Endothelial cell of umbilical vein (primary cell): ENCODE measurements at regions of chr2 and their contacts with region 1.

Region 1: DNA sequence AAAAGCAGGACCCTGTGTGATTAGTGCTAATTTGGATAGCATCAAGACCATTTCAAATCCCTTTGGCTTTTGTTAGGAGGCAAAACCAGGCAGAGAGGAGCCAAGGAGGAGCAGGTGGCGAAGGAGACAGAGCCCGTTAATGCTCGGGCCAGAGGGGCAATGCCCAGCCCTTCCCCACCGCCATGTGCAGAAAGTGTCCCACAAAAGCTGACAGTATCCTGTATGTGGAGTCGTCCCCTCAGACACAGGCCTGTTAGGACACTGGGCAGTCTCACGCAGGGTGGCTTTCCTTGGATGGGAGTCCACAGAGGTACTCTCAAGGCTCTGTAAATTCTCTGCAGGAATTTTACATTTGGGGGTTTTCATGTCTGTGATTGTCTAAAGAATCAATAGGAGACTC is 44.8 kb upstream of the TFCP2L1 start:
- DNase-seq: no peak
- H3K4me3 ChIP-seq: no peak overlapping the region
- H3K27ac ChIP-seq: no peak overlapping the region
- H3K4me1 ChIP-seq: no peaks in the 10 kb centered on the region
- H3K27me3 ChIP-seq: peaks cover 0 to 2% of the 10 kb centered on the region in 2 experiments
- CTCF ChIP-seq: no peak
- POLR2A ChIP-seq: no peak

Region 2: DNA sequence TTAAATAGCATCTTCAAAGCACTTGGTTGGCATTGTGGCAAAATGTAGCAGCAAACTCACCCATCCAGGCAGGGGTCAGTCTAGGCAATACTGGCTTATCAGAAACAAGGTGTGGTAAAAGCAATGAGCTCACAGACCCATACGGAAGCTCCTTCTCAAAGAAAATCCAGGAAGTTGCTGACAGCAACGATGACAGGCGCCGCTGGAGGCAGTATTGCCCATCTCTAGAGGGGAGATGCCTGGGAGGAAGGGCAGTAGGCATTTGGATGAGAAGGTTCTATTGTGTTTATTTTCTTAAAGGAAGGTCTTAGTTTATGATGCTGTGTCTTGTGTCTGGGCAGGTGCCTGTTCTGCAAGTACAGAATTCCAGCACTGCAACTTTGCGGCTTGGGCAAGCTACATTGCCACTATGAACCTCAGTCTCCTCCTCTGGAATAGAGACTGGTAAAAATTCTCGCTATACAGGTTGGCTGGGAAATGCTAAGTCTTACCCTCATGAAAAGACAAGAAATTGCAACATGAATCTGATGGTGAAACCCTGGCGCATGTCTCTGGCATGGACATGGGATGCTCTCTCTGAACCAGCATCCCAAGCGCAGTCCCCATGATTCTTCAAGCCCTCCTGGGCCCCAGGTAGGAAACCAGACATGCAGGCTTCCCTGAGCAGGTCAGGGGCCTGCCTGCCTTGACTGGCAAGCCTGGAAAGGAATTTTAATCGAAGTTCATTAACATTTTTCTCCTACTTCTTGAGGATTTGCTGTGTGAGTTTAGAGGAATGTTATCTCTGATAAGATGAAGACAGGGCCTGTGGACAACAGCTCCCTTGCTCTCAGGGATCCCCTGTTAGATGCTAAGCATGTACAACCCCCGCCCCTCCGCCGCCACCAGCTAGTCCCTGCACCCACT is 200.8 kb before region 1 on chr2:
- CTCF ChIA-PET with region 1: interaction called, 3 read pairs
- POLR2A ChIA-PET with region 1: no interaction called
- dilution Hi-C with region 1: no loop called
- intact Hi-C with region 1: loop called (anchors 10 kb)
- DNase-seq: peak; percentile 7
- H3K4me3 ChIP-seq: no peak overlapping the region
- H3K27ac ChIP-seq: no peak overlapping the region
- H3K4me1 ChIP-seq: no peaks in the 10 kb centered on the region
- H3K27me3 ChIP-seq: no peaks in the 10 kb centered on the region
- CTCF ChIP-seq: peak; percentile 35 to 58
- POLR2A ChIP-seq: no peak